CD4-positive, alpha-beta memory T cell (primary cell): ENCODE measurements at regions of chr3 and their contacts with region 1.

Region 1: DNA sequence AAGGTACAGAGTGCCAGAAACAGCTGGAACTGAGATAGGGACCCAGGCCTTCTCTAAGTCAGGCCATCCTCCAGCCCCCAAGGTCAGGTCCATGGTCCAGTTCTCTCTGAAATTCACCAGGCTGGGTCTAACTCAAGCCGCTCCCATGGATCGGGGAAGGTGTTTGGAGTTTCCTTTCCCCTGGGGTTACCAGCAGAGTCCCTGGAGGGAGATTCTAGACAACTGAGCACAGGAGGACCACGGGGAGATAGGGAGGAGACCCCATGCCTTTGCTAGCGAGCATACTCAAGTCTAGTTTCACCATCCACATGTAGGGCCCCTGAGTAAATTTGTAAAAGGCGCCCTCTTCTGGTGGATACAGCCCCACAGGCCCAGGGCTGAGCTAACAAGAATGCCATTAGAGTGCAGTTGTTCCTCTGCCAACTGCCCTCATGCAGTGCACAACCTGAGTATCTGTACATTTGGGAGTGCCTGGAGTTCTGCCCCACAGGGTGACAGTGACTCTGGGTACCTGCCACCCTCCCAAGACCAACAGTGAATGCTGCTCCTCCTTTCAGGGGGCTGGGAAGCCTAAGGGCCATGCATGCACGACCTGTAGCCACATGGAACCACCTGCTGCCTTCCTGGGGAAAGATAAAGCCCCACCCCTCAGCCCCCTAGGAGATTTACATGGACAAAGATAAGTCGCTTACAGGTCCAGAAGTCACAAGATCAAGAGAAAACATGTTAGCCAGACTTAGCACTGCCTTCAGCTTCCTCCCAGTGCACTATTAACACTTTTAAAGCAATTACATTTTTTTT is 89.0 kb downstream of the IQSEC1 start:
- DNase-seq: peak; percentile 43 to 63 (median 54)
- H3K4me3 ChIP-seq: no peak overlapping the region
- H3K4me3 Mint-ChIP-seq: peak overlapping the region in 1 of 8 donors; percentile 20
- H3K27ac ChIP-seq: no peak overlapping the region
- H3K27ac Mint-ChIP-seq: peak overlapping the region in 6 of 7 donors; percentile 10 to 86 (median 81)
- H3K4me1 ChIP-seq: peaks cover 62% of the 10 kb centered on the region
- H3K4me1 Mint-ChIP-seq: peaks cover 35 to 90% (median 57%) of the 10 kb centered on the region in 4 donors
- H3K27me3 ChIP-seq: no peaks in the 10 kb centered on the region
- H3K27me3 Mint-ChIP-seq: no peaks in the 10 kb centered on the region

Region 2: DNA sequence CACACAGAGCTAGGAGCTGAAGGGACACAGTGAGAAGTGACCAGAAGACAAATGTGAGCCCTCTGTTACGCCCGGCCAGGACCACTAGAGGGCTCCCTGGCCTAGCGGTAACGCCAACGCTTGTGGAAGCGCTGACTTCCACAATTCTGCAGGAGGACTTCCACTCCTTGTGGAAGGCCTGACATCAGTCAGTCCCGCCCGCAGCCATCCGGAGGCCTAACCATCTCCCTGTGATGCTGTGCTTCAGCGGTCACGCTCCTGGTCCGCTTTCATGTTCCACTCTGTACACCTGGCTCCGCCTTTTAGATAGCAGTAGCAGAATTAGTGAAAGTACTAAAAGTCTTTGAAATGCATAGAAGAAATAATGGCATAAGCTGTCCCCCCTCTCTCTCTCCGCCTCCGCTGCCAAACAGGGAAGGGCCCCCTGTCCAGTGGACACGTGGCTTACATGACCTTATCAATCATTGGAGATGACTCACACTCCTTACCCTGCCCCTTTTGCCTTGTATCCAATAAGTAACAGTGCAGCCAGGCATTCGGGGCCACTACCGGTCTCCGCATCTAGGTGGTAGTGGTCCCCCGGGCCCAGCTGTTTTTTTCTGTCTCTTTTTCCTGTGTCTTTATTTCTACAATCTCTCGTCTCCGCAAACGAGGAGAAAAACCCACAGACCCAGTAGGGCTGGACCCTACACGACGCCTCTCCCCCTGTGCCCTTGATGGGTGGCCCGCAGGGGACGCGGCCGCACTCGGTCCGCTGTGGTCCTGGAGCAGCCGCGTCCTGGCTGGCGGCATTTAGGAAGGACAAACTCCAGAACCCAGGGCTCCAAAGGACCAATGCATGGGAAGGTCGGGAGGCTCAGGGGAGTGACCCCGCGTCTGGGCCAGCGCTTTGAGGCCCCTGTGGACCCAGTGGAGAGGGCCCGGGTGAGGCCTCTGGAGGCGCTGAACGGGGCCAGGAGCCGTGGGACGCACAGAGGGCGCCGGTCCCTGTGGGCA is 115.9 kb before region 1 on chr3:
- CTCF ChIA-PET with region 1: interaction called, 8 read pairs
- POLR2A ChIA-PET with region 1: no interaction called
- intact Hi-C with region 1: loop called (anchors 1 kb)
- DNase-seq: peak; percentile 42 to 71 (median 56)
- H3K4me3 ChIP-seq: peak overlapping the region; percentile 22 to 36
- H3K4me3 Mint-ChIP-seq: peak overlapping the region; percentile 72 to 92 (median 88)
- H3K27ac ChIP-seq: no peak overlapping the region
- H3K27ac Mint-ChIP-seq: peak overlapping the region in 2 of 7 donors; percentile 10 to 19
- H3K4me1 ChIP-seq: peaks cover 13% of the 10 kb centered on the region
- H3K4me1 Mint-ChIP-seq: peaks cover 7 to 23% (median 11%) of the 10 kb centered on the region in 4 donors
- H3K27me3 ChIP-seq: no peaks in the 10 kb centered on the region
- H3K27me3 Mint-ChIP-seq: peaks cover 9 to 15% of the 10 kb centered on the region in 2 donors

Region 3: GRCh38 chr3:12967606-12968351 is 16.4 kb before region 1 on chr3:
- CTCF ChIA-PET with region 1: interaction called, 49 read pairs
- POLR2A ChIA-PET with region 1: interaction called, 4 read pairs
- intact Hi-C with region 1: no loop called
- DNase-seq: peak; percentile 82 to 89 (median 83)
- H3K4me3 ChIP-seq: peak overlapping the region in 1 of 2 donors; percentile 50
- H3K4me3 Mint-ChIP-seq: peak overlapping the region; percentile 67 to 86 (median 82)
- H3K27ac ChIP-seq: peak overlapping the region; percentile 8
- H3K27ac Mint-ChIP-seq: peak overlapping the region; percentile 27 to 89 (median 78)
- H3K4me1 ChIP-seq: peaks cover 68% of the 10 kb centered on the region
- H3K4me1 Mint-ChIP-seq: peaks cover 47 to 87% (median 65%) of the 10 kb centered on the region in 4 donors
- H3K27me3 ChIP-seq: no peaks in the 10 kb centered on the region
- H3K27me3 Mint-ChIP-seq: no peaks in the 10 kb centered on the region

Region 4: GRCh38 chr3:12973827-12974226 is 10.4 kb before region 1 on chr3:
- CTCF ChIA-PET with region 1: interaction called, 49 read pairs
- POLR2A ChIA-PET with region 1: interaction called, 4 read pairs
- intact Hi-C with region 1: no loop called
- DNase-seq: no peak
- H3K4me3 ChIP-seq: no peak overlapping the region
- H3K4me3 Mint-ChIP-seq: no peak overlapping the region
- H3K27ac ChIP-seq: no peak overlapping the region
- H3K27ac Mint-ChIP-seq: peak overlapping the region in 2 of 7 donors; percentile 23 to 37
- H3K4me1 ChIP-seq: peaks cover 29% of the 10 kb centered on the region
- H3K4me1 Mint-ChIP-seq: peaks cover 25 to 83% (median 45%) of the 10 kb centered on the region in 4 donors
- H3K27me3 ChIP-seq: no peaks in the 10 kb centered on the region
- H3K27me3 Mint-ChIP-seq: no peaks in the 10 kb centered on the region

Region 5: DNA sequence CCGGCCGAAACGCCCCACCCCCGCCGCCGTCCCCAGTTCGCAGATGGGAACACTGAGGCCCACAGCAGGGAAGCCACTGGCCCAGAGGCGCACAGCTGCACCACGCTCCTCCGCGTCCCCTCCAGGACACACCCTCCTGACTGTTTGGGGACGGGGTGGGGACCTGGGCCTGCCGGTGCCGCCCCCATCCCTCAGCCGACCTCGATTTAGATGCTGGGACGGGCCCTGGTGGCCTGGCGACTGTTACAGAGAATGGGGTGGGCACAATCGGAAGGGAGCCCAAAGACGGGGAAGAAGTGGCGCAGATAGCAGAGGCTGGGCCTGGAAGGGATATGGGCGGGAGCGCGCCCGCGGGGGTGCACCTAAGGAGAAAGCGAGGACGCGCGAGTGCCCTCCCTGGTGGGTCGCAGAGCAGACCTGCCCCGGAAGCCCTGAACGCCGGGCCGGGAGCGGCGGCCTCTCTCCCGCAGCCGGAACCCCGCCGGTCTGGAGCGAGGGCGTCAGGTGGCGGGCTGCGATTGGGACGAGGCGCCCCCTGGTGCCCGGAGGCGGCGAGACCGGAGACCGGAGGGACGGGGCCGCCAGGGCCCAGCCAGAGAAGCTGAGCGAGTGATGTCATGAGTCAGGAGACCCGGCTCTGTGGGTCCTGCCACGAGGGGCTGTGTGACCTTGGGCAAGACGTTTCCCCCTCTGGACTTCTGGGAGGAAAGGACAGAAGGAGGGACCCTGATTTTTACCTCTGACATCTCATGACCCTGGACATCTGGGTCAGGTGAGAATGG is 10.6 kb after region 1 on chr3:
- CTCF ChIA-PET with region 1: interaction called, 13 read pairs
- POLR2A ChIA-PET with region 1: interaction called, 13 read pairs
- intact Hi-C with region 1: loop called (anchors 1 kb)
- DNase-seq: peak; percentile 84 to 87 (median 85)
- H3K4me3 ChIP-seq: peak overlapping the region; percentile 54 to 84
- H3K4me3 Mint-ChIP-seq: peak overlapping the region; percentile 91 to 97 (median 94)
- H3K27ac ChIP-seq: peak overlapping the region; percentile 69
- H3K27ac Mint-ChIP-seq: peak overlapping the region; percentile 92 to 97 (median 96)
- H3K4me1 ChIP-seq: peaks cover 62% of the 10 kb centered on the region
- H3K4me1 Mint-ChIP-seq: peaks cover 30 to 82% (median 58%) of the 10 kb centered on the region in 4 donors
- H3K27me3 ChIP-seq: no peaks in the 10 kb centered on the region
- H3K27me3 Mint-ChIP-seq: no peaks in the 10 kb centered on the region

Region 6: DNA sequence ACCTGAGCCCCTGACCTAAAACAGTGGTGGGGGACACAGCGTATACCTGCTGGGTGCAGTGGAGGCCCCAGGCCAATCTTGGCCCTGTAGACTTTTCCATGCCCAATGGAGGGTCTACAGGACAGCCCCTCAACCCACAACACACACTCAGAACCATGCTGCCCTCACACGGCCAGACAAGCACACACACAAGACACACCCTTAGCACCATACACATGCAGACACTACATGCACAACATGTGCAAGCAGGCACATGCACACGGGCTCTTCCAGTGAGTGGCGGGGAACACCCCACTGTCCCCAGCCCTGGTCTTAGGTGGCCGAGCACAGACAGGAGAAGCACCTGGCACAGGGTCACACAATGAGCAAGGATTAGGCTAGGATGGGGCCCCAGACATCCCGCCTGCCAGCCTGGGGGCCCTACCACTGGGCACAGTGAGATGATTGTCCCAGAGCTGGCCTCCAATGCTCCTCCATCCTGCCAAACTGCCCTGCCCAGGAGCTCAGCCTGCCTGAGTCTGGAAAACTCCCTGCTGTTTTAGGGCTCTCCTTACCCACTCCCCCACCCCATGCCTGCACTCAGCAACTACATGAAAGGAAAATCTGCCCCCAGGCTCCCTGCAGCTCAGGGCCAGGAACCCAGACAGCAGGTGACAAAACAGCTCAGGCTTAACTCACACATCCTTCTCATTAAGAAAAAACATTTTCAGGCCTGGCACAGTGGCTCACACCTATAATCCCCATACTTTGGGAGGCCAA is 73.2 kb after region 1 on chr3:
- CTCF ChIA-PET with region 1: no interaction called
- POLR2A ChIA-PET with region 1: no interaction called
- intact Hi-C with region 1: no loop called
- DNase-seq: no peak
- H3K4me3 ChIP-seq: no peak overlapping the region
- H3K4me3 Mint-ChIP-seq: peak overlapping the region in 1 of 8 donors; percentile 4
- H3K27ac ChIP-seq: no peak overlapping the region
- H3K27ac Mint-ChIP-seq: peak overlapping the region in 1 of 7 donors; percentile 69
- H3K4me1 ChIP-seq: no peaks in the 10 kb centered on the region
- H3K4me1 Mint-ChIP-seq: no peaks in the 10 kb centered on the region
- H3K27me3 ChIP-seq: no peaks in the 10 kb centered on the region
- H3K27me3 Mint-ChIP-seq: peaks cover 1 to 2% of the 10 kb centered on the region in 2 donors